Activated CD8-positive, alpha-beta T cell treated with anti-CD3 and anti-CD28 coated beads for 36 hours (primary cell): ENCODE measurements at regions of chr1 and their contacts with region 1.

Region 1: GRCh38 chr1:19715334-19716203 is 50.9 kb downstream of the HTR6 start:
- DNase-seq: peak; percentile 96
- ATAC-seq: peak; percentile 95
- H3K4me3 Mint-ChIP-seq: no peak overlapping the region
- H3K27ac Mint-ChIP-seq: no peak overlapping the region
- H3K4me1 Mint-ChIP-seq: peaks cover 17% of the 10 kb centered on the region
- H3K27me3 Mint-ChIP-seq: no peaks in the 10 kb centered on the region
- CTCF ChIP-seq: peak; percentile 79

Region 2: DNA sequence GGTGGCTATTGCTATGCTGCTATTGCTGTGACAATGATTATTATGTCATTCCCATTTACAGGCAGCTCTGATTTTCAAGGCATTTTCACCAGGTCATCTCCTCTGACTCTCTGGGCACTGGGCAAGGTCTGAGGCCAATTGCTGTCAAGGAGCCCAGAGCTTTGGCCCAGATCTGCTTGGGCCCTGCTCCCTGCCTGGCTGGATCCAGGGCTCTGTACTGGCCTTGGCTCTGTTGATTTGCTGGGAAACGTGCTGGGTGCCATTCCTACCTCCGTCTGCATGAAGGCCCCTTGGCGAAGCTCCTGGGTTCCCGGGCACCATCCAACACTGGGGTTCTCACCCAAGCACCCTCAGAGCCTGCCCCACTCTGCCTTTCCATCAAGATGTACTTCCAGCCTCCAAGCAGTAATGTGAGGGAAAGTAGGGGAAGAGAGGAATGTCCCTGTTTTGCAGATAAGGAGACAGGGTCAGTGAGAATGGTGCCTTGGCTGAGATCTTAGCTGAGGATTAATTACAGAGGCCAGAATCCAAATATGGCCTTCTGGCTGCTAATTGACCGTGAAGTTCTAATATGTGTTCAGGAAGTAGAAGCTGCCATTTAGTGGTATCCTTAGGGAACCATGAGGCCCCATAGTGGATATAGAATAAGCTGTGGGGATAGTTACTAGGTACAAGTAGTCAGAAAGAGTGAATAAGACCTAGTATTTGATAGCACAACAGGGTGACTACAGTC is 13.0 kb after region 1 on chr1:
- CTCF ChIA-PET with region 1: interaction called, 22 read pairs
- POLR2A ChIA-PET with region 1: no interaction called
- intact Hi-C with region 1: no loop called
- DNase-seq: no peak
- ATAC-seq: no peak
- H3K4me3 Mint-ChIP-seq: no peak overlapping the region
- H3K27ac Mint-ChIP-seq: no peak overlapping the region
- H3K4me1 Mint-ChIP-seq: no peaks in the 10 kb centered on the region
- H3K27me3 Mint-ChIP-seq: no peaks in the 10 kb centered on the region
- CTCF ChIP-seq: no peak

Region 3: DNA sequence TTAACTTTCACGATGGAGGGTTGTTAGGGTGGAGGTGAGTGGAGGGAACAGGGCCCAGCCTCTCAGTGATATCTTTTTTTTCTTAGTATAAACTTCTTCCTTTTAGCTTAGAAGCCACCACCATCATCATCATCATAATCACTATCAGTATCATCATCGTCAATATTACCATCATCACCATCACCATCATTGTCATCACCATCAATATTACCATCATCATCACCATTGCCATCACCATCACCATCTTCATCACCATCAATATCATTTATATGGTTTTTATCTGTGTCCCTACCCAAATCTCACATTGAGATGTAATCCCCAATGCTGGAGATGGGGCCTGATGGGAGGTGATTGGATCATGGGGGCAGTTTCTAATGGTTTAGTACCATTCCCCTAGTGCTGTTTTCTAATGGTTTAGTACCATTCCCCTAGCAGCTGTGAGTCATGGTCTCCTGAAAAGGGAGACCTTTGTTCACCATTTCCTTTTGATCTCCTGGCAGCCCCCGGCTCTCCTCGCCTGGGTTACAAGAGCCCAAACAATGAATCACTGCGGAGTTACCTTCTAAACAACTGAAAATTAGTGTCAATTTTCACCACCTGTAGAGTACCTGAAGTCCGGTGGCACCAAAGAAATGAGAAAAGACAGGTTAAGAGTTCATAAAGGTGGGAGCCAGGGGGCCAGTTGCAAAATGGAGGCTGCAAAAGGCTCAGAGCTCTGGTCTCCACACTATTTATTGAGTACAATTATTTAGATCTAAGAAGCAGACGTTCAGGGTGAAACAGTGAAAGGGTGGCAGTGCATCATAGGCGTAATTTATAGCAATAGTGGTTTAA is 210.9 kb after region 1 on chr1:
- CTCF ChIA-PET with region 1: no interaction called
- POLR2A ChIA-PET with region 1: no interaction called
- intact Hi-C with region 1: no loop called
- DNase-seq: no peak
- ATAC-seq: no peak
- H3K4me3 Mint-ChIP-seq: no peak overlapping the region
- H3K27ac Mint-ChIP-seq: no peak overlapping the region
- H3K4me1 Mint-ChIP-seq: no peaks in the 10 kb centered on the region
- H3K27me3 Mint-ChIP-seq: peaks cover 1% of the 10 kb centered on the region
- CTCF ChIP-seq: no peak